ENCODE measurements at regions of chr5 and their contacts with region 1.

Region 1: DNA sequence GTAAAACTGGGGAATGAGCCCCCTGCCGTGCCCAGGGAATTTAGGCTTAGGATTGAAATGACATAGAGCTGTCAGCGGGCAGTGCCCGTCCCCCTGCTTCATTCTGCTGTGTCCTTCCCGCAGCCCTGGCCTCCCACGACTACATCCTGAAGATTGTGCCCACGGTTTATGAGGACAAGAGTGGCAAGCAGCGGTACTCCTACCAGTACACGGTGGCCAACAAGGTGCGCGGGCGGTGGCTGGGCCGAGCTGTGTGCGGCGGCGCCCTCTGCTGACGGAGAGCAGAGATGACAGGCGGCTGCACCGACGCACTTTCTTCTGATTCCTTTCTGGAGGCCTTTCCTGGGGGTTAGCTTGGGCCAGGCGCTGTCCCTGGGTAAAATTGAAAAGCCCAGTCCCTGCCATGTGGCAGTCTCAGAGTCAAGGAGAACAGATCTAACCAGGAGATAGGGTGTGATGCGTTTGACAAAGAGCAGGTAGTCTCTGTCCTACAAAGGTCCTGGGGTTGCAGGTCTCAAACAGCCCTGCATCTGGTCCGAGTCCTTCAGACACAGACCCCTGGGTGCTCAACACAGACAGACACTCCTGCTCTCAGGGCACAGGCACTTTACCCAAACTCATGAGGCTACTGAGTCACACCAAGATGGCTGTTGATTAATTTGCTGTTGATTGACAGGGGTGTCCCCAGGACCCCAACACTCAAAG is 26.8 kb upstream of the RPL26L1 start:
- DNase-seq: peak; percentile 88
- ATAC-seq: peak; percentile 97
- H3K4me3 Mint-ChIP-seq: no peak overlapping the region
- H3K27ac Mint-ChIP-seq: no peak overlapping the region
- H3K4me1 Mint-ChIP-seq: peaks cover 4% of the 10 kb centered on the region
- H3K27me3 Mint-ChIP-seq: no peaks in the 10 kb centered on the region

Region 2: GRCh38 chr5:172721301-172722130 is 210.9 kb before region 1 on chr5:
- CTCF ChIA-PET with region 1: interaction called, 42 read pairs
- POLR2A ChIA-PET with region 1: no interaction called
- intact Hi-C with region 1: loop called in 1 of 2 experiments (anchors 1 kb)
- DNase-seq: peak; percentile 34
- ATAC-seq: peak; percentile 49
- H3K4me3 Mint-ChIP-seq: no peak overlapping the region
- H3K27ac Mint-ChIP-seq: peak overlapping the region; percentile 51
- H3K4me1 Mint-ChIP-seq: peaks cover 16% of the 10 kb centered on the region
- H3K27me3 Mint-ChIP-seq: no peaks in the 10 kb centered on the region